Prostate gland (tissue), 2 donors: ENCODE measurements at regions of chr9 and their contacts with region 1.

Region 1: GRCh38 chr9:81588148-81588871 is 101.0 kb downstream of the TLE1 start:
- DNase-seq: peak; percentile 84
- H3K4me3 ChIP-seq: no peak overlapping the region
- H3K27ac ChIP-seq: peak overlapping the region; percentile 46 to 64
- H3K4me1 ChIP-seq: no peaks in the 10 kb centered on the region
- H3K27me3 ChIP-seq: no peaks in the 10 kb centered on the region
- CTCF ChIP-seq: peak in 1 of 4 experiments; percentile 1
- POLR2A ChIP-seq: no peak

Region 2: GRCh38 chr9:81671880-81672280 is 83.6 kb after region 1 on chr9:
- intact Hi-C with region 1: loop called (anchors 5 kb)
- DNase-seq: peak; percentile 58
- H3K4me3 ChIP-seq: no peak overlapping the region
- H3K27ac ChIP-seq: no peak overlapping the region
- H3K4me1 ChIP-seq: peaks cover 4% of the 10 kb centered on the region
- H3K27me3 ChIP-seq: no peaks in the 10 kb centered on the region
- CTCF ChIP-seq: no peak
- POLR2A ChIP-seq: no peak